Calu3 (cell line): ENCODE measurements at regions of chrX and their contacts with region 1.

Region 1: DNA sequence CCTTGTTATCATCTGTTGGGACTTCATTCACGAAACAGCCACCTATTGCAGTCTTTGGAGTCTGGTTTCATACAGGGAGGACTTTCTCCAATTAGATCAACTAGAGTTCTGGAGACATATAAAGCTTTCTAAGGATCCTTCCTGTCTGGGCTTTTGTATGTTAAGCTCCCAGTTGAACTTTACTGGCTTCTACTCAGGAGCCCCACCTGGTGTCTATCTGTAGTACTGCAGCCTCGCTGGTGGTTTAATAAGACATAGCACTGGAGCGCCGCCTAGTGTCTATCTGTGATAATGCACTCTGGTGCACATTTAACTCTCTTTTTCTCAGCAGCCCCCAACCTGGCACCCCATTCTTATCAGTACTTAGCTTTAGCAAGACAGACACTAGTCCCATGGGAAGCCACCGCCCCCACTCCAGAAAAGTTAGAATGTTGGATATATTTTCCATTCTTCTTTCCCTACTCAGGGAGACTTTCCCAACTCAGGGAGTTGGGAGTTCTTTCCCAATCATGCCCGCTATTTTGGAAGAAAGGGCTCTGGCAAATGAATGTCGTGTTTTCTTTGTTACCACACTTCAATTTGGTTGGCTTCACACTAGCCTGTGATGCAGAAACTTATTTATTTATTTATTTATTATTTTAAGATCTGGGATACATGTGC is 36.9 kb upstream of the SYTL4 start:
- DNase-seq: peak; percentile 85
- H3K4me3 Mint-ChIP-seq: no peak overlapping the region
- H3K27ac Mint-ChIP-seq: peak overlapping the region; percentile 73
- H3K4me1 Mint-ChIP-seq: peaks cover 7% of the 10 kb centered on the region
- H3K27me3 Mint-ChIP-seq: no peaks in the 10 kb centered on the region
- CTCF ChIP-seq: peak; percentile 98

Region 2: DNA sequence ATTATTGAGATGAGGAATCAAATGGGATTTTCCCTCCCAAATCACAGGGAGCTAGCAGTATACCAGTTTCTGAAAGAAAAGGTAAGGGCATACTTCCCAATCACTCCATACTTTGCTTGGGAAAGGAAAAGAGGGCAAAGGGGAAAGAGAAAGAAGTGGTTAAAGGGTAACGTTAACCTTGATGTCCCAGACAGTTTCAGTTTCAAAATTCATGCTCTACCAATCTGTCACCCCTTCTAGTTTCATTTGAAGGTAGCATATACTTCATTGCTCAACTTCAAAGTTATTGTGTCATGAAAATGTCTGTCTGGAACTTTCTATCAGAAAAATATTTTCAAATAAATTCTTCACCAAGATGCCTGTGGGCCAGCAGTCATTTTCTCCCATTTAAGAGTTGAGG is 168.1 kb before region 1 on chrX:
- CTCF ChIA-PET with region 1: no interaction called
- intact Hi-C with region 1: no loop called
- DNase-seq: no peak
- H3K4me3 Mint-ChIP-seq: no peak overlapping the region
- H3K27ac Mint-ChIP-seq: no peak overlapping the region
- H3K4me1 Mint-ChIP-seq: no peaks in the 10 kb centered on the region
- H3K27me3 Mint-ChIP-seq: peaks cover 16% of the 10 kb centered on the region
- CTCF ChIP-seq: no peak

Region 3: GRCh38 chrX:100615005-100615404 is 153.8 kb before region 1 on chrX:
- CTCF ChIA-PET with region 1: interaction called, 12 read pairs
- intact Hi-C with region 1: loop called (anchors 5 kb)
- DNase-seq: peak; percentile 46
- H3K4me3 Mint-ChIP-seq: no peak overlapping the region
- H3K27ac Mint-ChIP-seq: no peak overlapping the region
- H3K4me1 Mint-ChIP-seq: peaks cover 7% of the 10 kb centered on the region
- H3K27me3 Mint-ChIP-seq: no peaks in the 10 kb centered on the region
- CTCF ChIP-seq: peak; percentile 25

Region 4: GRCh38 chrX:100685284-100685996 is 83.4 kb before region 1 on chrX:
- CTCF ChIA-PET with region 1: interaction called, 16 read pairs
- intact Hi-C with region 1: loop called (anchors 1 kb)
- DNase-seq: peak; percentile 73
- H3K4me3 Mint-ChIP-seq: no peak overlapping the region
- H3K27ac Mint-ChIP-seq: no peak overlapping the region
- H3K4me1 Mint-ChIP-seq: no peaks in the 10 kb centered on the region
- H3K27me3 Mint-ChIP-seq: no peaks in the 10 kb centered on the region
- CTCF ChIP-seq: peak; percentile 76